HCT116 (cell line): ENCODE measurements at regions of chr17 and their contacts with region 1.

Region 1: GRCh38 chr17:40499551-40500174 is 1.8 kb downstream of the TNS4 start:
- DNase-seq: no peak
- ATAC-seq: peak; percentile 70
- H3K4me3 ChIP-seq: peak overlapping the region; percentile 79 to 80
- H3K27ac ChIP-seq: peak overlapping the region; percentile 41
- H3K4me1 ChIP-seq: peaks cover 27 to 50% of the 10 kb centered on the region in 2 experiments
- H3K27me3 ChIP-seq: no peaks in the 10 kb centered on the region
- CTCF ChIP-seq: no peak
- POLR2A ChIP-seq: no peak
- RAD21 ChIP-seq: peak; percentile 22; the same call in 1 of the 2 replicates

Region 2: GRCh38 chr17:40475234-40475908 is 24.3 kb before region 1 on chr17:
- CTCF ChIA-PET with region 1: interaction called, 17 read pairs
- POLR2A ChIA-PET with region 1: interaction called, 4 read pairs
- RAD21 ChIA-PET with region 1: no interaction called
- intact Hi-C with region 1: no loop called
- DNase-seq: no peak
- ATAC-seq: no peak; the same call in 1 of the 2 replicates
- H3K4me3 ChIP-seq: no peak overlapping the region
- H3K27ac ChIP-seq: peak overlapping the region; percentile 2; the same call in 1 of the 2 replicates
- H3K4me1 ChIP-seq: peaks cover 10 to 61% of the 10 kb centered on the region in 2 experiments; a peak in 3 of 4 replicates
- H3K27me3 ChIP-seq: no peaks in the 10 kb centered on the region
- CTCF ChIP-seq: no peak
- POLR2A ChIP-seq: no peak
- RAD21 ChIP-seq: no peak

Region 3: GRCh38 chr17:40487371-40488020 is 12.2 kb before region 1 on chr17:
- CTCF ChIA-PET with region 1: no interaction called
- POLR2A ChIA-PET with region 1: interaction called, 11 read pairs
- RAD21 ChIA-PET with region 1: no interaction called
- intact Hi-C with region 1: no loop called
- DNase-seq: no peak
- ATAC-seq: no peak
- H3K4me3 ChIP-seq: no peak overlapping the region
- H3K27ac ChIP-seq: peak overlapping the region; percentile 49; the same call in 1 of the 2 replicates
- H3K4me1 ChIP-seq: peaks cover 57 to 86% of the 10 kb centered on the region in 2 experiments
- H3K27me3 ChIP-seq: no peaks in the 10 kb centered on the region
- CTCF ChIP-seq: no peak
- POLR2A ChIP-seq: no peak
- RAD21 ChIP-seq: no peak

Region 4: DNA sequence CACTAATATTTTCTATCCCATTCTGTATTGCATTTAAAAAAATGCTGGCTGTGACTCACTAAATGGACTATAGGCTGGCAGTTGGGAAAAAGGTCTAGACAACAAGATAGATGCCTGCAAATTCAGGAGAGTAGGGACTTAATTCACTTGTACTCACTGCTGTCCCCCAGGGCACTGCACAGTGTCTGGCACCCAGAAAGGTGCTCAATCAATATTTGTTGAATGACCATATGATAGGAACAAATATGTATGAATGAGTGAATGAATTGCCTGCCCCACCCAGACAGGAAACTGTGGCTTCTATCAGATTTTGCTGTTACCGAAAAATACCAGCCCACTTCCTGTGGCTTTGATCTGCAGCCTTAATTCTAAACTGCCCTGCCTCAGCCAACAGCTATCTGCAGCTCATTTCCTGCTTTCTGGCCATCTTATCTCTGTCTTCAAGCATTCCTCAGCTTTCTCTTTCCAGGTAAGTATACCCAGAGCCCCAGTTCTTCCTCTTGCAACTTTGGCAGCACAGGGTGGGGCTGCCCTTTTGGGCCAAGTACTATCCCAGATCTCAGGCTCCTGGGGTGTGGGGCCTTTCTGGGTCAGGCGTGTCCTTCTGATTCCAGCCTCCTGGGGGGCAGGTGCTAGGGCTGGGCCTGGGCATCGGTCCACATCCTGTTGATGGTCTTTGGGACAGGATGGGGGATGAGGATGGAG is 17.1 kb after region 1 on chr17:
- CTCF ChIA-PET with region 1: no interaction called
- POLR2A ChIA-PET with region 1: interaction called, 11 read pairs
- RAD21 ChIA-PET with region 1: interaction called in 1 of 2 experiments, 3 read pairs
- intact Hi-C with region 1: no loop called
- DNase-seq: peak; percentile 62
- ATAC-seq: peak; percentile 48
- H3K4me3 ChIP-seq: peak overlapping the region; percentile 16 to 32; a peak in 3 of 4 replicates
- H3K27ac ChIP-seq: peak overlapping the region; percentile 83
- H3K4me1 ChIP-seq: peaks cover 81 to 100% of the 10 kb centered on the region in 2 experiments
- H3K27me3 ChIP-seq: no peaks in the 10 kb centered on the region
- CTCF ChIP-seq: no peak
- POLR2A ChIP-seq: no peak
- RAD21 ChIP-seq: no peak